Activated T-helper 1 cell treated with anti-CD3 and anti-CD28 coated beads, Interleukin-12 subunit alpha, Interleukin-12 subunit beta, Interleukin-2, Interleukin-4 antibody, amounts not matched to agents 30 ng/mL and 10 ng/mL and 1 ng/mL, durations not matched to agents 14 hours and 24 hours and 36 hours (primary cell): ENCODE measurements at regions of chr7 and their contacts with region 1.

Region 1: GRCh38 chr7:155746188-155746587 is 66.1 kb downstream of the SHH start:
- DNase-seq: no peak
- H3K4me3 Mint-ChIP-seq: no peak overlapping the region
- H3K27ac Mint-ChIP-seq: peak overlapping the region; percentile 68
- H3K4me1 Mint-ChIP-seq: peaks cover 67% of the 10 kb centered on the region
- H3K27me3 Mint-ChIP-seq: no peaks in the 10 kb centered on the region

Region 2: GRCh38 chr7:155733582-155734444 is 12.4 kb before region 1 on chr7:
- intact Hi-C with region 1: loop called (anchors 1 kb)
- DNase-seq: no peak
- H3K4me3 Mint-ChIP-seq: no peak overlapping the region
- H3K27ac Mint-ChIP-seq: no peak overlapping the region
- H3K4me1 Mint-ChIP-seq: peaks cover 54% of the 10 kb centered on the region
- H3K27me3 Mint-ChIP-seq: no peaks in the 10 kb centered on the region

Region 3: DNA sequence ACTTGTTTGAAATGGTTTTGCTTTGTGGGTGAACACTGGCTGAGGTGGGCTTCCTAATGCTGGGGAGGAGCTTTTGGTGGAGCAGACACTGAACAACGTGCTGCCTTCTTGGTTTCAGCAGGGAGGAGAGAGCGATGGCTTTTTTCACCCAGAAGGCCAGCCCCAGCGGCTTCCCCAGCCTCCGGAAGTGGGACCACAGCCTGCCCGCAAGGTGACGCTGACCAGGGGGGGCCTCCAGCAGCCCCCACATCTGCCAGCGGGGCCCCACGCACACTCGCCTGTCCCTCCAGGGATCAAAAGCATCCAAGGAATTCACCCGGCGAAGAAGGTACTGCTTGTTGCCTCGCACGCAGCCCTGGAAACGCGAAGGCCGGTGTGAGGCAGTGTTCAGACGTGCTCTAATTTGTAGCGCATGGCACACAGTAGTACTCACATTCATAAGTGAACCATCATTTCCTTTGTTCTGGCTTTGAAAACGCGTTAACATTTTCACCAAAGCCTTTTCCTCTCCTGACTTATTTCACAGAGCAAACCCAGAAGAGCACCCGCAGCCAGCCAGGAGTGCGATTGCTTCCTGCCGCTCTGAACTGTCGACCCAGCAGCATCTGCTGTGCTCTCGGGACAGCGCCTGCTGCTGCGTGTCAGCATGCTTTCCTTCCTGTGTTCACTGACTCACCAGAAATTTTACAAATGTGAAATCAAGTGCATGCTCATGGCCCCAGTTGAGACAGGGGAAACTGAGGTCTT is 17.7 kb after region 1 on chr7:
- intact Hi-C with region 1: loop called (anchors 1 kb)
- DNase-seq: peak; percentile 65
- H3K4me3 Mint-ChIP-seq: peak overlapping the region; percentile 85
- H3K27ac Mint-ChIP-seq: peak overlapping the region; percentile 100
- H3K4me1 Mint-ChIP-seq: peaks cover 66% of the 10 kb centered on the region
- H3K27me3 Mint-ChIP-seq: no peaks in the 10 kb centered on the region